HEK293 (cell line): ENCODE measurements at regions of chr1 and their contacts with region 1.

Region 1: GRCh38 chr1:109493805-109494539 is at the start of gene CYB561D1:
- H3K4me3 ChIP-seq: peak within 1 kb of the TSS; percentile 95
- H3K27ac ChIP-seq: peak within 1 kb of the TSS; percentile 6; the same call in 1 of the 2 replicates
- H3K4me1 ChIP-seq: no peaks in the 10 kb centered on the region
- CTCF ChIP-seq: peak; percentile 97

Region 2: DNA sequence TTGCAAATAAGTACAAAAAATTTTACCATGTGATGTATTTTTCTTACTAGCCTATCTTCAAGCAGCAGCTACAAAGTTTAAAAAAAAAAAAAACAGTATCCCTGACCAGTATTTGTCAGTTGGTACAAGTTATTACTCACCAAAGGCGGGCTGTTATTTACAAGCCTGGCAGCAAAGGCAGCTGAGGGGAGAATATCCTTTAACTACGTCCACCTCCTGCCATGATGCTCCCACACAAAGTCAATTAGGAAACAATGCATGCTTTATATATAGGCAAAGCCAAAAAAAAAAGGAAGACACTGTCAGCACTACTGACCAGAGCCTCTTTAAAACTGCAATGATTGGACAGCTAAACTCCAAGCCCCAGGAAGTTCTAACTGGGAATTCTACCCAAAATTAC is 81.4 kb before region 1 on chr1:
- CTCF ChIA-PET with region 1: interaction called, 12 read pairs
- POLR2A ChIA-PET with region 1: no interaction called
- H3K4me3 ChIP-seq: no peak overlapping the region
- H3K27ac ChIP-seq: no peak overlapping the region
- H3K4me1 ChIP-seq: no peaks in the 10 kb centered on the region
- CTCF ChIP-seq: no peak

Region 3: DNA sequence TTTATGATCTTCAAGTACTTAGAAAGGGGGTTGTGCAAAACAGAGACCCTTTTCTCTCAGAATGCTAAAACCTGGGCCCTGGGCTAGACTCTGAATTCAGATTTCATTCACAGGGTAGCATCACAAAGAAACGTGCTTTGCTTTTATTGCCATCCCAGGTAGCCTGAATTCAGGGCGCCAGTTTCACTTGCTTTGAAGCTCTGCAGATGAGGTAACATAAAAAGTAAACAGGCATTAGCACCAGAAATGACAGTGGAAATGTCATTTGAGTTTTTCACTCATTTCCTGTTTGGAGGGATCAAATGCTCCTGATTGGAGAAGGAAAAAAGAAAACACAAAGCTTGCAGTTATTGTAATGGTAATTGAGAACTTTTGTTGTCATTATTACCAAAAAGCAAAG is 25.1 kb before region 1 on chr1:
- CTCF ChIA-PET with region 1: interaction called, 13 read pairs
- POLR2A ChIA-PET with region 1: no interaction called
- H3K4me3 ChIP-seq: no peak overlapping the region
- H3K27ac ChIP-seq: no peak overlapping the region
- H3K4me1 ChIP-seq: no peaks in the 10 kb centered on the region; the same call in 1 of the 2 replicates
- CTCF ChIP-seq: no peak

Region 4: DNA sequence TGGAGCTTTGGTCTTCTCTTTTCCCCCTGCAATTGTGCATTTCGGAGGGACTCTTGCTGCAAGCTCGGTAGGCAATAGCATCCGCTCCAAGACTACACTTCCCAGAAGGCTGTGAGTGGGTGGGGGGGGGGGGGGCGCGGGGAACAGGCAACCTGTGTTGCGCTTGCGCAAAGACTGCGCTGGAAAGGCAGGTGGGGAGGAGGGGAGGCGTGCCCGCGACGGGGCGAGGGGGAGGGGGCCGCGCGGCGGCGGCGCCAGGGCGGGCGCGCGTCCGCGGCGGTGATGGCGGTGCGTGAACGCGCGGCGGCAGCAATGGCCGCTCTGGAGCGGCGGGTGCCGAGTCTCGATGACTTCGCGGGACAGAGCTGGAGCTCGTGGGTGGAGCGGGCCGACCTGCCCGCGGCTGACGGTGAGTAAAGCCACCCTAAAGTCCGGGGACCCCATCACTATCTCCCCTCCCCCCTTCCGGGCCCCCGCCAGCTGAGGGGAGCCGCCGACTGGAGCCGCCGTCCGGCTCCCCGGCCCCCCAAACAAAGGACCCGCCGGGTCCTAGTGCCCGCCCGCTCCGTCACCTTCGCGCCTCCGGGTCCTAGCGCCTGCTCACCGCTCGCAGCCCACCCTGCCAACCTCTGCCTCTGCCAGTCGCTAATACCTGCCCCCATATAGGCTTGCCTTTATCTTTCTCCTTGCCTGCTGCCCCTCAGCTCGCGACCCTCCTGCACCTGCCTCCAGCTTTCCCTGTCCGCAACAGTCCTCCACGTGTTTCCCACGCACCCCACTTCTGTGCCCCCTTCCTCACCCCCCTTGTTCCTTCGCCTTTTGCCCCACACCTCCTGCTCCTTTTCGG is 10.1 kb before region 1 on chr1 and contains the start of gene ATXN7L2:
- CTCF ChIA-PET with region 1: interaction called, 72 read pairs
- POLR2A ChIA-PET with region 1: interaction called, 8 read pairs
- H3K4me3 ChIP-seq: peak within 1 kb of the TSS; percentile 60
- H3K27ac ChIP-seq: peak within 1 kb of the TSS; percentile 81
- H3K4me1 ChIP-seq: no peaks in the 10 kb centered on the region
- CTCF ChIP-seq: no peak; the same call in 1 of the 2 replicates

Region 5: GRCh38 chr1:109509176-109510134 is 15.5 kb after region 1 on chr1 and contains the start of gene AMIGO1:
- CTCF ChIA-PET with region 1: interaction called, 303 read pairs
- POLR2A ChIA-PET with region 1: interaction called, 5 read pairs
- H3K4me3 ChIP-seq: peak within 1 kb of the TSS; percentile 52
- H3K27ac ChIP-seq: peak within 1 kb of the TSS; percentile 37; the same call in 1 of the 2 replicates
- H3K4me1 ChIP-seq: no peaks in the 10 kb centered on the region
- CTCF ChIP-seq: no peak

Region 6: DNA sequence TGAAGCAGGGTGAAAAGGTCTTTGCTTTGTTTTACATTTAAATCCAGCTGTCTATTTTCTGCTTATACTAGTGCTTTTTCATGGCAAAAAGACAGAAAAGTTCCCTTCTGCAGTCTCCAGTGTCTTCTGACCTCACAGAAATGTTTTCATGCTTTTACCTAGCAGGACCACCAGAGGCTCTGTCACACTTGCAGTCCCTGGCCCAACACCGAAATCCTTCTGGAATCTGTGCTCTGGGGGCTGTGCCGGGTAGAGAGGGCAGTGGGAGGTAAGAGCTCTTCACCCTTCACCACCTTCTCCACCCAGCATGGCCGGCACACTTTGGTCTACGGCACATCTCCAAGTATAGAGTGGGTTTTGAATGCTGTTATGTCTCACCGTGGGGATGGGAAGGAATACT is 104.7 kb after region 1 on chr1:
- CTCF ChIA-PET with region 1: no interaction called
- POLR2A ChIA-PET with region 1: no interaction called
- H3K4me3 ChIP-seq: no peak overlapping the region
- H3K27ac ChIP-seq: no peak overlapping the region
- H3K4me1 ChIP-seq: no peaks in the 10 kb centered on the region
- CTCF ChIP-seq: 0 out of 2 replicates have a peak, but pooled peaks have one; percentile 11